Colonic mucosa (tissue), 4 donors: ENCODE measurements at regions of chr7 and their contacts with region 1.

Region 1: DNA sequence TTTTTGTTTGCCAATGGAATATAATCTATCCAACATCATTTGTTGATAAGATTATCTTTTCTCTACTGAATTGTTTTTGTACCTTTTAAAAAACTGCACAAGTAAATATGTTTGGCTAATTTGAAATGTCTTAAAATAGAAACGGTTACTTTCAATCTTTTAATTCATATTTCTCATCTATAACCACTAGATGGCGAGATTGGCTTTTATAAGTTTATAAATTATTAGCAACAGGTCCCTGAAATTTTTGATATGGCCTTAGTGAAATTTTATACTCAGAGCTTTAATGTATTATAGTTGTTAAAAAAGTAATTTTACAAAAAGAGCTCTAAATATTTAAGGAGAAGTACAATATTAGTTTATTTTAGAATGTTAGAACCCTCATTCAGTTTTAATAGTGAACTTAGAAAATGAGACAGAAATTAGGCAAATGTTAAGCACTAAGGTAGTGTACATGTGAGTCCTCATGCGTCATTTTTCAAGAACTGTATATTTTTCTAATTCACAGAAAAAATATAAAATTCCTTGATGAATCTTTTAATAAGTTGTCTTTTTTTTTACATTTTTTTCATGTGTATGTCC is 592.5 kb downstream of the ARL4A start:
- DNase-seq: no peak
- H3K4me3 ChIP-seq: no peak overlapping the region
- H3K27ac ChIP-seq: no peak overlapping the region
- H3K4me1 ChIP-seq: no peaks in the 10 kb centered on the region
- H3K27me3 ChIP-seq: no peaks in the 10 kb centered on the region
- CTCF ChIP-seq: peak; percentile 32

Region 2: GRCh38 chr7:13312327-13312726 is 32.4 kb after region 1 on chr7:
- intact Hi-C with region 1: loop called (anchors 2 kb)
- DNase-seq: no peak
- H3K4me3 ChIP-seq: no peak overlapping the region
- H3K27ac ChIP-seq: no peak overlapping the region
- H3K4me1 ChIP-seq: no peaks in the 10 kb centered on the region
- H3K27me3 ChIP-seq: no peaks in the 10 kb centered on the region
- CTCF ChIP-seq: no peak

Region 3: DNA sequence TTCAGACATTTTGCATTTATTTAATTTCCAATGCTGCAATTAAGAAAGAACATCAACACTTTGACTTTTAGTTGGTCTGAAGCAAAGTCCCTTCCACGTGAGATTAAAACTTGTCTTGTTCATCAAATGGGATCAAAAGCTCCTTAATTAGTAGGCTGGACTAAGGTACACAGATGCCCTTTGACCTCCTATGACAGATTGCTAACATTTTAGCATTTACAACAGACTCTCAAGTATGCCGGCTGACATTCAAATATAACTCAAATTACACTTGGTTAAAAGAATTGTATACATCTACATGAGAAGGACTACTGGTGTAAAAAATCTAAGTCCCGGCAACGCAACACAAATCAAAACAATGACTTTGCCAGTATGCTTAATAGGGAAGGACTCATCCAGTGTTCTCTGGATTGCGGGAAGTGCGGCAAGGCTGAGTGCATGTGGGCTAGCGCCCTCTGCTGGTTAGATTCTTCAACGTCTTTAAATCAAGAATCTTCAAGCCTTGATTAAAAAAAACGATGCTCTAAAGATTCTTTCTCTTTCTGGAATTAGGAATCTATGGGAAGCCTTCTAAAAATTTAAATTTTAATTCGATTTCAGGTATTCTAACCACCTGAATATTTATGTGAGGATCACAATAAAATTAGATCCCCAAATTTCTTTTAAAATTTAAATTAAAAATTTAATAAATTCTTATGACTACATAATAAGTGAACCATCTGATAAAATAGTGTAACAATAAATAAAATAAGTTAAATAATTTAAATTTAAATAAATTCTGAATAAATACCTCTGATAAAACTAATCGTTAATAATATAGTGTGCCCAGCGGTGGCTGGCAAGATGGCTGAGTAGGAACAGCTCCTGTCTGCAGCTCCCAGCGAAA is 1177.9 kb after region 1 on chr7:
- intact Hi-C with region 1: loop called (anchors 5 kb)
- DNase-seq: peak; percentile 69
- H3K4me3 ChIP-seq: no peak overlapping the region
- H3K27ac ChIP-seq: no peak overlapping the region
- H3K4me1 ChIP-seq: no peaks in the 10 kb centered on the region
- H3K27me3 ChIP-seq: no peaks in the 10 kb centered on the region
- CTCF ChIP-seq: peak; percentile 77

Region 4: DNA sequence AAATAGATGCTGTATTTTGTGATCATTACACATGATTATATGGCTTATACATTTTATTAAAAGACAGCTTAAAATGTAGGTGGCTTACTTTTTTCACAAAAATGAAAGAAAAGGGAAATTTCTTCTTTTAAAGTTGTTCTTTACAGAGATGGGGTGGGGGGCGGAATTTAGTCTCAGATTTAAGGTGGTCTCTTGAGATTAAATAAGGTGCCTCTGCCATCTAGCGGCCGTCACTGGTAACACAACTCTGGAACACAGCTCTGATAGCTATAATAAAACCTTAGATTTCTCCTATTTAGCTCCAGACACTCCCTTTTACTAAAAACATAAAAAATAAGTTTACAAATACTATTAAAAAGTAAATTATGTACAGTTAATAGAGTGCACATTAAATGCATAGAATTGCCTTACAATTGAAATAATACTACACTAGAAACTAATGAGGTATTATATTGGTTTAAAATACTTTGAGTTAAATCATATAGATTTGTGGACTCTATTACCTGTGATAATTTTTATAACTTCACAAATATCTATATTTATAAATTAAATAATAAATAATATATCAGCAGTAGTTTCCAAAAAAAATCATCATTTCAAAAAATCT is 1411.8 kb after region 1 on chr7:
- intact Hi-C with region 1: loop called (anchors 2 kb)
- DNase-seq: peak; percentile 46
- H3K4me3 ChIP-seq: no peak overlapping the region
- H3K27ac ChIP-seq: no peak overlapping the region
- H3K4me1 ChIP-seq: no peaks in the 10 kb centered on the region
- H3K27me3 ChIP-seq: no peaks in the 10 kb centered on the region
- CTCF ChIP-seq: peak; percentile 76

Region 5: GRCh38 chr7:15015545-15016326 is 1735.8 kb after region 1 on chr7:
- intact Hi-C with region 1: loop called (anchors 5 kb)
- DNase-seq: peak; percentile 30
- H3K4me3 ChIP-seq: no peak overlapping the region
- H3K27ac ChIP-seq: no peak overlapping the region
- H3K4me1 ChIP-seq: no peaks in the 10 kb centered on the region
- H3K27me3 ChIP-seq: no peaks in the 10 kb centered on the region
- CTCF ChIP-seq: peak; percentile 64